ENCODE measurements at regions of chr17 and their contacts with region 1.

Region 1: DNA sequence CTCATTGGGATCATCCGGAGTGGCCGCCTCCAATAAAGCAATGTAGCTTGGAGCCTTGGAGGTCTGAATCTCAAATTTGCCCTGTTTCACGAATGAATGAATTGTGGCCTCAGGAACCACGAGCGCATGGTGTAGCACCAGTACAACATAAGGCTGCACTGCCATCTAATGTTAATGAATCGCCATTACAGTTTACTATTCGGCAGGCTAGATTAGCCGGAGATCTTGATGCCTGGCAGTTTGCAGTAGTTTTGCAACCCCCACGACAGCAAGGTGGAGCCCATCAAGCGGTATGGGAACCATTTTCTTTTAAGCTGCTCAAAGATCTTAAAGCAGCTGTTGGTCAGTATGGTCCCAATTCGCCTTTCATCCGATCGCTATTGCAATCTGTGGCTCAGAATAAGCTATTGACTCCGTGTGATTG is 18.8 kb downstream of the ALOX15B start:
- DNase-seq: peak; percentile 81 to 91 (median 89)
- H3K4me3 ChIP-seq: peak overlapping the region in 1 of 7 experiments; percentile 14
- H3K27ac ChIP-seq: no peak overlapping the region
- H3K4me1 ChIP-seq: peaks cover 35 to 58% (median 53%) of the 10 kb centered on the region in 4 experiments
- H3K27me3 ChIP-seq: peaks cover 0 to 10% (median 4%) of the 10 kb centered on the region in 5 experiments

Region 2: DNA sequence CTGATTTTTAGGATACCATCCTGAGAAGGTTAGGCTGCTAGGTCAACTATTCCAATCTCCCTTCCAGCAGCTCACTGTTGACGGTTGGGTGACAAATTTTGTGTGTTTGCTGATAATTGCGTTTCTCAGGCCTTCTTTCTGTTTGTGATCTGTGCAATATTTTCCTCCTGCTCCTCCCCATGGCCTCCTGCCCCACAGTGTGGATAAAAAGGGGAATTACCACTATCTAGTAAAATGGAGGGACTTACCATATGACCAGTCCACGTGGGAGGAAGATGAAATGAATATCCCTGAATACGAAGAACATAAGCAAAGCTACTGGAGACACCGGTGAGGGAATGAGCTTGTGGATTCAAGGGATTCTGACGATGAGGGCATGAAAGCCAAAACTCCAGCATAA is 159.9 kb before region 1 on chr17:
- CTCF ChIA-PET with region 1: interaction called, 15 read pairs
- POLR2A ChIA-PET with region 1: no interaction called
- DNase-seq: peak; percentile 74 to 89 (median 87)
- H3K4me3 ChIP-seq: no peak overlapping the region
- H3K27ac ChIP-seq: no peak overlapping the region
- H3K4me1 ChIP-seq: no peaks in the 10 kb centered on the region
- H3K27me3 ChIP-seq: no peaks in the 10 kb centered on the region

Region 3: GRCh38 chr17:7931709-7932482 is 125.8 kb before region 1 on chr17 and contains the starts of genes CNTROB and TRAPPC1:
- CTCF ChIA-PET with region 1: interaction called, 36 read pairs
- POLR2A ChIA-PET with region 1: interaction called, 3 read pairs
- DNase-seq: peak; percentile 99 to 100 (median 99)
- H3K4me3 ChIP-seq: peak within 1 kb of the TSS; percentile 50 to 98 (median 88)
- H3K27ac ChIP-seq: peak within 1 kb of the TSS; percentile 92 to 97
- H3K4me1 ChIP-seq: peaks cover 7 to 37% (median 24%) of the 10 kb centered on the region in 4 experiments
- H3K27me3 ChIP-seq: no peaks in the 10 kb centered on the region

Region 4: DNA sequence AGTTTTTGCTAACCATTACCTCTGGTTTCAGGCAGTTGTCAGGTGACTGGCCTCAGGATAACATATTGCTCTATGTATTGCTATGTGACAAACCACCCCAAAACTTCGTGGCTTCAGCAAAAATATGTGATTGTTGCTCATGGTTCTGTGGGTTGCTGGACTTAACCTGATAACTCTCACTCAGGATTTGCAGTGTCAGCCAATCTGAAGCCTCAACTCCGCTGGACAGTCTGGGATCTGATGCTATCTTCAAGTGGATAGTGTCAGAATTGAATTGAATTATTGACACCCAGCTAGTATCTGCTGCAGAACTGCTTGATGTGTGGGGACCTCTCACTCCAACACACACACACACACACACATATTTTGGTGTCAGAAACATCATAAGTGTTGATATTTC is 90.0 kb before region 1 on chr17:
- CTCF ChIA-PET with region 1: no interaction called
- POLR2A ChIA-PET with region 1: no interaction called
- DNase-seq: no peak
- H3K4me3 ChIP-seq: no peak overlapping the region
- H3K27ac ChIP-seq: no peak overlapping the region
- H3K4me1 ChIP-seq: peaks cover 0 to 3% (median 0%) of the 10 kb centered on the region in 4 experiments
- H3K27me3 ChIP-seq: no peaks in the 10 kb centered on the region

Region 5: GRCh38 chr17:7997186-7997585 is 60.5 kb before region 1 on chr17:
- CTCF ChIA-PET with region 1: interaction called, 12 read pairs
- POLR2A ChIA-PET with region 1: no interaction called
- DNase-seq: peak; percentile 57 to 83 (median 81)
- H3K4me3 ChIP-seq: peak overlapping the region in 1 of 7 experiments; percentile 30
- H3K27ac ChIP-seq: no peak overlapping the region
- H3K4me1 ChIP-seq: peaks cover 4 to 20% (median 15%) of the 10 kb centered on the region in 4 experiments
- H3K27me3 ChIP-seq: no peaks in the 10 kb centered on the region

Region 6: GRCh38 chr17:8041249-8041928 is 16.3 kb before region 1 on chr17:
- CTCF ChIA-PET with region 1: interaction called, 48 read pairs
- POLR2A ChIA-PET with region 1: no interaction called
- DNase-seq: peak; percentile 76 to 88 (median 84)
- H3K4me3 ChIP-seq: no peak overlapping the region
- H3K27ac ChIP-seq: no peak overlapping the region
- H3K4me1 ChIP-seq: peaks cover 0 to 27% (median 23%) of the 10 kb centered on the region in 4 experiments
- H3K27me3 ChIP-seq: no peaks in the 10 kb centered on the region

Region 7: GRCh38 chr17:8091033-8091687 is 33.5 kb after region 1 on chr17:
- CTCF ChIA-PET with region 1: interaction called, 44 read pairs
- POLR2A ChIA-PET with region 1: no interaction called
- DNase-seq: peak in 2 of 3 donors; percentile 41 to 46
- H3K4me3 ChIP-seq: no peak overlapping the region
- H3K27ac ChIP-seq: no peak overlapping the region
- H3K4me1 ChIP-seq: peaks cover 0 to 8% (median 5%) of the 10 kb centered on the region in 4 experiments
- H3K27me3 ChIP-seq: peaks cover 0 to 18% (median 10%) of the 10 kb centered on the region in 5 experiments

Region 8: DNA sequence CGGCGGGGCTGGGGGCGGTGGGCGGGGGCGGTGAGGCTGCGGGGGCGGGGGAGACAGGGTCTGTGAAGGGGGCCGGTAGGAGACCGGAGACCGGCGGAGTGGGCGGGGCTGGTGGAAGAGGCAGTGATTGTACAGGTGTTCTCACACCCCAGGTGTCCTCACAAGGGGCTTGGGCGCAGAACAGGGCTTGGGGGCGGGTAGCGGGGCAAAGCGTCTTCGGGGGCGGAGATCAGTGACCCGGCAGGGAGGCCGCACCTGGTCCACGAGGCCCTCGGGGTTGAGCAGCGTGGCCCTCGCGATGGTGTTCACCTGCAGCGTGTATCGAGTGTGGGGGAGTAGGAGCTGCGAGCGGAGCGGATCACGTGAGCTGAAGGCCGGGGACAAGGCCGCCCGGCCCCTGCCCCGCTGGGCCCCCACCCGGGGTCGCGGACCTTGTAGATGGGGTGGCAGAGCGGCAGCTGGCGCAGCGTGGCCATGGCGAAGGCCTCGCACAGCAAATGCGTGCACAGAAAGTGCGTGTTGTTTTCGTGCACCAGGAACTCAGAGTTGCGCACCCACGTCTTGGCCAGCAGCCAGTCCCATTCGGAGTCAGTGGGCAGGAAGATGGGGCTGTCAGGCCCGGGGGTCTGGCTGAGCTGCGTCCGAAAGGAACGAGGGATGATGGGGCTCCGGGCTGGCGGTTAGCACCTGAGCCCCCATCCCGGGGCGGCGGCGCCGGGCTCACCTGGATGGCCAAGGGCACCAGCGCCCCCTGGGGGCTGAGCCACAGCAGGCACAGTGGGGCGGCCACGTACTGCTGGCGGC is 52.2 kb after region 1 on chr17:
- CTCF ChIA-PET with region 1: interaction called, 31 read pairs
- POLR2A ChIA-PET with region 1: no interaction called
- DNase-seq: peak; percentile 55 to 76 (median 71)
- H3K4me3 ChIP-seq: peak overlapping the region in 6 of 7 experiments; percentile 8 to 75 (median 57)
- H3K27ac ChIP-seq: no peak overlapping the region
- H3K4me1 ChIP-seq: peaks cover 0 to 21% (median 16%) of the 10 kb centered on the region in 4 experiments
- H3K27me3 ChIP-seq: peaks cover 2 to 16% (median 2%) of the 10 kb centered on the region in 5 experiments

Region 9: DNA sequence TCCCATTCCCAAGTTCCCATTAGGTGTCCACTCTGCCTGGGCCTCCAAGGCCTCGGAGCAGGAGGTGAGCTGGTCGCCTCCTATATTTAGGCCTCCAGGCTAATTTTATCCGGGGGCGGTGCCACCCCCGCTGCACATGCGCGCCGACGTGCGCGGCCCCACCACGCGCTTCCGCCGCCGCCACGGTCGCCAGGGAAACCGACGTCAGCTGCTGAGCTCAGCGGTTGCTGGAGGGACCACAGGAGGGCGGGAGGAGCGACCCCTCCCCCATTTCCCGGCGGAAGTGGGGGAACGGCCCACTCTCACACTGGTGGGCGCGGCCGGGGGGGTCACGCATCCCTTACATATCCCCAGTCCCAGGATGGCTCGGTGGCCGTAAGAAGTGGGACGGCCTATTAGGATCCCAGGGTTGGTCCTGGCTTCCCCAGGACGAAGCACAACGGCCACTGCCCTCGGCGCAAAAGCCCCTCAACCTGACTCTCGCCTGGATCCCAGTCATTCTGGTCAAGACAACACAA is 93.5 kb after region 1 on chr17:
- CTCF ChIA-PET with region 1: no interaction called
- POLR2A ChIA-PET with region 1: no interaction called
- DNase-seq: peak; percentile 88 to 92 (median 90)
- H3K4me3 ChIP-seq: peak overlapping the region; percentile 61 to 94 (median 80)
- H3K27ac ChIP-seq: peak overlapping the region; percentile 85 to 92
- H3K4me1 ChIP-seq: peaks cover 12 to 62% (median 60%) of the 10 kb centered on the region in 4 experiments
- H3K27me3 ChIP-seq: no peaks in the 10 kb centered on the region